Heart right ventricle (tissue), 16 donors: ENCODE measurements at regions of chr20 and their contacts with region 1.

Region 1: GRCh38 chr20:33971147-33971975 is 22.4 kb upstream of the RALY start:
- DNase-seq: no peak
- ATAC-seq: no peak
- H3K4me3 ChIP-seq: no peak overlapping the region
- H3K27ac ChIP-seq: no peak overlapping the region
- H3K4me1 ChIP-seq: no peaks in the 10 kb centered on the region
- H3K27me3 ChIP-seq: no peaks in the 10 kb centered on the region
- CTCF ChIP-seq: no peak

Region 2: DNA sequence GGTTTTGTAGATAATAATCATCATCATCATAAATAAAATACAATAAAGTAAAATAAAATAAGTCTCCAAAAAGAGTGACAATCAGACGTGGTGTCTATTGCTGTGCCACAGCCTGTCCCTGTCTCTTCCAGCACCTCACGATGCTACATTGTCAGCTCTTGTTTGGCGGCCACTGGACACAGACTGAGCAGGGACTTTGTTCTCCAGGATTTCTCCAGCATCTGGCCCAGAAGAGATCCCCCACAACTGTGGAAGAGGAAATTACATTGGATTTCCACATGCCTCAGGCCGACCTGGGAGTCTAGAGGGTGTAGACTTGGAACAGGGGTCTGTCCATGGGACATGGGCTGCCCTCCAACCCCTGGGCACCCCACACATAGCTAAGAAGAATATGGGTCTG is 16.9 kb before region 1 on chr20:
- intact Hi-C with region 1: loop called in 1 of 10 experiments (anchors 1 kb)
- DNase-seq: no peak
- ATAC-seq: no peak
- H3K4me3 ChIP-seq: no peak overlapping the region
- H3K27ac ChIP-seq: no peak overlapping the region
- H3K4me1 ChIP-seq: no peaks in the 10 kb centered on the region
- H3K27me3 ChIP-seq: no peaks in the 10 kb centered on the region
- CTCF ChIP-seq: no peak

Region 3: GRCh38 chr20:34165018-34165619 is 193.8 kb after region 1 on chr20:
- intact Hi-C with region 1: no loop called
- DNase-seq: no peak
- ATAC-seq: no peak
- H3K4me3 ChIP-seq: no peak overlapping the region
- H3K27ac ChIP-seq: no peak overlapping the region
- H3K4me1 ChIP-seq: peaks cover 0 to 5% (median 0%) of the 10 kb centered on the region in 9 donors
- H3K27me3 ChIP-seq: no peaks in the 10 kb centered on the region
- CTCF ChIP-seq: no peak